ENCODE measurements at regions of chr2 and their contacts with region 1.

Region 1: GRCh38 chr2:64404002-64404731 is 49.8 kb upstream of the LGALSL start:
- DNase-seq: peak; percentile 77
- ATAC-seq: peak; percentile 39
- H3K4me3 ChIP-seq: peak overlapping the region; percentile 39 to 59 (median 46)
- H3K27ac ChIP-seq: peak overlapping the region; percentile 45
- H3K4me1 ChIP-seq: peaks cover 78% of the 10 kb centered on the region
- H3K27me3 ChIP-seq: no peaks in the 10 kb centered on the region
- CTCF ChIP-seq: no peak
- EP300 ChIP-seq: no peak
- POLR2A ChIP-seq: no peak
- RAD21 ChIP-seq: no peak

Region 2: GRCh38 chr2:64434039-64434657 is 30.0 kb after region 1 on chr2:
- CTCF ChIA-PET with region 1: no interaction called
- POLR2A ChIA-PET with region 1: no interaction called
- in situ Hi-C with region 1: no loop called
- intact Hi-C with region 1: no loop called
- DNase-seq: peak; percentile 29
- ATAC-seq: peak; percentile 67; the same call in 2 of the 3 replicates
- H3K4me3 ChIP-seq: no peak overlapping the region
- H3K27ac ChIP-seq: no peak overlapping the region
- H3K4me1 ChIP-seq: peaks cover 11% of the 10 kb centered on the region
- H3K27me3 ChIP-seq: no peaks in the 10 kb centered on the region
- CTCF ChIP-seq: no peak
- EP300 ChIP-seq: peak in 1 of 2 experiments; percentile 4; a peak in 1 of 4 replicates
- POLR2A ChIP-seq: no peak
- RAD21 ChIP-seq: no peak

Region 3: GRCh38 chr2:64453770-64454385 is 49.7 kb after region 1 on chr2 and contains the start of gene LGALSL:
- CTCF ChIA-PET with region 1: no interaction called
- POLR2A ChIA-PET with region 1: interaction called, 4 read pairs
- in situ Hi-C with region 1: no loop called
- intact Hi-C with region 1: loop called (anchors 5 kb)
- DNase-seq: peak; percentile 66
- ATAC-seq: peak; percentile 89
- H3K4me3 ChIP-seq: peak within 1 kb of the TSS; percentile 75 to 93 (median 85)
- H3K27ac ChIP-seq: peak within 1 kb of the TSS; percentile 85
- H3K4me1 ChIP-seq: peaks cover 27% of the 10 kb centered on the region
- H3K27me3 ChIP-seq: no peaks in the 10 kb centered on the region; a peak in 1 of 5 replicates
- CTCF ChIP-seq: no peak
- EP300 ChIP-seq: no peak
- POLR2A ChIP-seq: peak; percentile 46 to 63; a peak in 3 of 4 replicates
- RAD21 ChIP-seq: no peak; the same call in 1 of the 2 replicates
- total RNA-seq, gene LGALSL: 15.4 and 22.6 TPM in 2 replicates